GM13977 (cell line): ENCODE measurements at regions of chr16 and their contacts with region 1.

Region 1: DNA sequence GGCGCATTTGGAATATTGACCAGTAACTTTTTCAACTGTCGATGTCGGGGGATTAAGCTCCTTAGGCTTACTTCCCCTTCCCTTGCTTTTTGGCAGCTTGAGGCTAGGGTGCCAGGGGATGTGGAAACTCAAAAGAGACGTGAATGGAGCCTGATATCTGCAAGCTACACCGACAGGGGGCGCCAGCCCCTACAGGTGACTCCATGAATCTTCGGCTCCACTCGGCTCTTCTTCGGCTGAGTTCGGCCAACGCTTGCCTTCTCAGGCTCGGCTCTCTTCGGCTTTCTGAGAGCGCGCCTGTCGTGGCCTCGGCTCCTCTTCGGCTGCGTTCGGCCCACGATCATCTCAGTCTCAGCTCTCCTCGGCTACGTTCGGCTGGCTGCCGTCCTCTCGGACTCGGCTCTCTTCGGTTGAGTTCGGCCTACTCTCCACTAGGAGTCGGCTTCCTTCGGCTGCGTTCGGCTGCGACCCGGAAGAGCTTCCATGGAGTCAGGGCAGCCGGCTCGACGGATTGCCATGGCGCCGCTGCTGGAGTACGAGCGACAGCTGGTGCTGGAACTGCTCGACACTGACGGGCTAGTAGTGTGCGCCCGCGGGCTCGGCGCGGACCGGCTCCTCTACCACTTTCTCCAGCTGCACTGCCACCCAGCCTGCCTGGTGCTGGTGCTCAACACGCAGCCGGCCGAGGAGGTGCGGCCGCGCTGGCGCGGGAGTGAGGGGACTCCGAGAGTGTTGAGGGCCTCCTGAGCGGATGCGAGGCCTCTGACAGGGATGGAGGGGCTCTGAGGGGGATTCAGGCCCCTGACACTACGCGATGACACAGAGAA is at the start of gene ERCC4:
- DNase-seq: peak; percentile 97
- CTCF ChIP-seq: peak; percentile 82

Region 2: GRCh38 chr16:14285513-14286385 is 365.9 kb after region 1 on chr16:
- in situ Hi-C with region 1: loop called (anchors 10 kb)
- DNase-seq: peak; percentile 94
- CTCF ChIP-seq: no peak